Lower leg skin (tissue), 4 donors: ENCODE measurements at regions of chr6 and their contacts with region 1.

Region 1: GRCh38 chr6:17156112-17156921 is 54.5 kb downstream of the STMND1 start:
- DNase-seq: peak in 1 of 2 donors; percentile 66
- H3K4me3 ChIP-seq: no peak overlapping the region
- CTCF ChIP-seq: no peak
- POLR2A ChIP-seq: no peak

Region 2: DNA sequence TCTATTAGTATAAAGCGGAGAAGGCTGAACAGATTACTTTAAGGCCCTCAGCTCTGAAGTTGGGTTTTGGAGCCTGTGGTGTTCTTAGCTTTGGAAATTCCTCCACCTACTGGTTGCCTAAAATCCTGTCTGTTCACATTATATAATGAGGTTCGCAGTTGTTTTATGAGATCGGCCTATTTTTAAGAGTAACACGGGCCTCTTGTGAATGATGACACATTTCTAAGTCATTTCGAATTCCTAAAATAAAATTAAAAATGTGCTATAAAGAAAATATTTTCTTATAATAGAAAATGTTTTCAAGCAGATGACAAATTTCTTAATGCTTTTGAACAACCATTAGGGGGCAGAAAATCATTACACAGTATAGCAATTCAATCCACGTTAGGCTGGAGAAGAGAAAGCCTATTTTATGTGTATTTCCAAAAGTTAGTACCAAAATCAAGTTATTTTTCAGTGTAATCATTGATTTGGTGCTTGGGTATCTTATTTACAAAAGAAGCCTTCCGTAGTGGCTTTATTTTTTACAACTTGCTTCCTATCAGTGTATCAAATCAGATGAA is 428.0 kb after region 1 on chr6:
- intact Hi-C with region 1: loop called (anchors 5 kb)
- DNase-seq: peak in 1 of 2 donors; percentile 37
- H3K4me3 ChIP-seq: no peak overlapping the region
- CTCF ChIP-seq: peak in 1 of 3 donors; percentile 81
- POLR2A ChIP-seq: no peak

Region 3: GRCh38 chr6:17808609-17809008 is 652.3 kb after region 1 on chr6:
- intact Hi-C with region 1: loop called (anchors 10 kb)
- DNase-seq: no peak
- H3K4me3 ChIP-seq: no peak overlapping the region
- CTCF ChIP-seq: no peak
- POLR2A ChIP-seq: no peak

Region 4: GRCh38 chr6:17957498-17957897 is 801.2 kb after region 1 on chr6:
- intact Hi-C with region 1: no loop called
- DNase-seq: no peak
- H3K4me3 ChIP-seq: no peak overlapping the region
- CTCF ChIP-seq: no peak
- POLR2A ChIP-seq: no peak